Natural killer cell (primary cell): ENCODE measurements at regions of chr17 and their contacts with region 1.

Region 1: GRCh38 chr17:32006957-32007462 is at the start of gene LRRC37B:
- DNase-seq: peak; percentile 88 to 91
- ATAC-seq: peak; percentile 88 to 97 (median 94)
- H3K4me3 ChIP-seq: peak within 1 kb of the TSS; percentile 80
- H3K4me3 Mint-ChIP-seq: peak within 1 kb of the TSS; percentile 95
- H3K27ac ChIP-seq: peak within 1 kb of the TSS; percentile 61
- H3K27ac Mint-ChIP-seq: peak within 1 kb of the TSS; percentile 89 to 91
- H3K4me1 ChIP-seq: peaks cover 34% of the 10 kb centered on the region
- H3K4me1 Mint-ChIP-seq: peaks cover 34 to 38% of the 10 kb centered on the region in 2 donors
- H3K27me3 ChIP-seq: no peaks in the 10 kb centered on the region
- H3K27me3 Mint-ChIP-seq: no peaks in the 10 kb centered on the region
- CTCF ChIP-seq: peak; percentile 86
- total RNA-seq, gene LRRC37B: 46.6 to 64.8 (median 57.1) TPM

Region 2: GRCh38 chr17:31967648-31968047 is 39.4 kb before region 1 on chr17:
- intact Hi-C with region 1: no loop called
- DNase-seq: no peak
- ATAC-seq: no peak
- H3K4me3 ChIP-seq: no peak overlapping the region
- H3K4me3 Mint-ChIP-seq: no peak overlapping the region
- H3K27ac ChIP-seq: no peak overlapping the region
- H3K27ac Mint-ChIP-seq: no peak overlapping the region
- H3K4me1 ChIP-seq: no peaks in the 10 kb centered on the region
- H3K4me1 Mint-ChIP-seq: peaks cover 0 to 11% of the 10 kb centered on the region in 2 donors
- H3K27me3 ChIP-seq: no peaks in the 10 kb centered on the region
- H3K27me3 Mint-ChIP-seq: no peaks in the 10 kb centered on the region
- CTCF ChIP-seq: no peak

Region 3: GRCh38 chr17:32020943-32021614 is 14.1 kb after region 1 on chr17:
- intact Hi-C with region 1: no loop called
- DNase-seq: no peak
- ATAC-seq: no peak
- H3K4me3 ChIP-seq: no peak overlapping the region
- H3K4me3 Mint-ChIP-seq: no peak overlapping the region
- H3K27ac ChIP-seq: no peak overlapping the region
- H3K27ac Mint-ChIP-seq: no peak overlapping the region
- H3K4me1 ChIP-seq: no peaks in the 10 kb centered on the region
- H3K4me1 Mint-ChIP-seq: peaks cover 12 to 14% of the 10 kb centered on the region in 2 donors
- H3K27me3 ChIP-seq: no peaks in the 10 kb centered on the region
- H3K27me3 Mint-ChIP-seq: no peaks in the 10 kb centered on the region
- CTCF ChIP-seq: no peak

Region 4: GRCh38 chr17:32142038-32142856 is 135.2 kb after region 1 on chr17 and contains the start of gene RHOT1:
- intact Hi-C with region 1: loop called (anchors 1 kb)
- DNase-seq: peak; percentile 76 to 88
- ATAC-seq: peak; percentile 76 to 89 (median 88)
- H3K4me3 ChIP-seq: peak within 1 kb of the TSS; percentile 94
- H3K4me3 Mint-ChIP-seq: peak within 1 kb of the TSS; percentile 95
- H3K27ac ChIP-seq: peak within 1 kb of the TSS; percentile 72
- H3K27ac Mint-ChIP-seq: peak within 1 kb of the TSS; percentile 90 to 92
- H3K4me1 ChIP-seq: peaks cover 16% of the 10 kb centered on the region
- H3K4me1 Mint-ChIP-seq: peaks cover 25 to 30% of the 10 kb centered on the region in 2 donors
- H3K27me3 ChIP-seq: no peaks in the 10 kb centered on the region
- H3K27me3 Mint-ChIP-seq: no peaks in the 10 kb centered on the region
- CTCF ChIP-seq: peak; percentile 41
- total RNA-seq, gene RHOT1: 25.1 to 32.7 (median 28.3) TPM